PC-9 (cell line): ENCODE measurements at regions of chr17 and their contacts with region 1.

Region 1: DNA sequence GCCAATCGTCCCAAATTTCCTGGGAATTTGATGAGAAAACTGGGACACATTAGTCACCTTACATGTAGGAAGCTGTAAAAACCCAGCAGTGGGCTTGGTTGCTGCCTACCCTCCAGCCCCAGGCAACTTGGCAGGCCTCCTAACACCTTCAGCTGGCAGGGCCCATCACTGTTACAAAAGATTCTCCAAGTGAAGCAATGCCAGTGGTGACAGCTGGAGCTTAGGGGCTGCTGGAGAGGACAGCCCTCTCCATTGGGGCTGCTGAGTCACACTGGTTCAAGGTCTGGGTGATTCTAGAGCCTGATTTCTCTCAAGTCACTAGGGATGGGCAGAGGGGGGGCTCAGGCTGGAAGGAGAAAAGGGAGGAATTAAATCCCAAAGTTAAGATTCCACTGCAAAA is 180.6 kb downstream of the COPRS start:
- DNase-seq: peak; percentile 25 to 49
- H3K4me3 ChIP-seq: no peak overlapping the region
- H3K27ac ChIP-seq: no peak overlapping the region
- H3K4me1 ChIP-seq: peaks cover 27% of the 10 kb centered on the region
- H3K27me3 ChIP-seq: no peaks in the 10 kb centered on the region
- CTCF ChIP-seq: no peak

Region 2: DNA sequence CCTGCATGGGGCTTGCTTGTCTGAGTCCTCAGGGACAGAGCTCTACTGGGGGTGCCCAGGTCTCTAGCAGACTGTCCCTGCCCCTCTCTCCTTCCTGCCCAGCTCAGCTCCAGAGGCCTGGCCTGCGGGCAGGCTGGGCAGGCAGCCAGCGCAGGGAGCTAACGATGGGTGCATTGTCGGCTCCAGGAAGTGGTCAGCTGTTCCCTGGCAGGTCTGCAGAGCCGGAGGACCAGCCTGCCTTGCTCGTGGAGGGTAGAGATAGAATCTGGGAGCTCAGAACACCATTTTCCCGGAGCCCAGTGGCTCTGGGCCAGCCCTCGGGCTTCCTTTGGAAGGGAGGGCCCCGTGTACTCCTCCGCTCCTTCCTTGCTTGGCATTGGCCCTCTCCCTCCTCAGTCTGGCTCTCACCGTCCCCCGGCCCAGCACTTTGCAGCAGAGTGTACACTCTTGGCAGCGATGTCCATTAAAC is 97.4 kb before region 1 on chr17:
- CTCF ChIA-PET with region 1: no interaction called
- POLR2A ChIA-PET with region 1: interaction called, 11 read pairs
- intact Hi-C with region 1: no loop called
- DNase-seq: peak; percentile 90 to 95
- H3K4me3 ChIP-seq: no peak overlapping the region
- H3K27ac ChIP-seq: peak overlapping the region; percentile 71
- H3K4me1 ChIP-seq: peaks cover 63% of the 10 kb centered on the region
- H3K27me3 ChIP-seq: no peaks in the 10 kb centered on the region
- CTCF ChIP-seq: no peak

Region 3: GRCh38 chr17:31596382-31597323 is 81.8 kb before region 1 on chr17:
- CTCF ChIA-PET with region 1: interaction called, 3 read pairs
- POLR2A ChIA-PET with region 1: no interaction called
- intact Hi-C with region 1: loop called (anchors 1 kb)
- DNase-seq: peak; percentile 88 to 94
- H3K4me3 ChIP-seq: no peak overlapping the region
- H3K27ac ChIP-seq: peak overlapping the region; percentile 71
- H3K4me1 ChIP-seq: peaks cover 47% of the 10 kb centered on the region
- H3K27me3 ChIP-seq: no peaks in the 10 kb centered on the region
- CTCF ChIP-seq: no peak

Region 4: DNA sequence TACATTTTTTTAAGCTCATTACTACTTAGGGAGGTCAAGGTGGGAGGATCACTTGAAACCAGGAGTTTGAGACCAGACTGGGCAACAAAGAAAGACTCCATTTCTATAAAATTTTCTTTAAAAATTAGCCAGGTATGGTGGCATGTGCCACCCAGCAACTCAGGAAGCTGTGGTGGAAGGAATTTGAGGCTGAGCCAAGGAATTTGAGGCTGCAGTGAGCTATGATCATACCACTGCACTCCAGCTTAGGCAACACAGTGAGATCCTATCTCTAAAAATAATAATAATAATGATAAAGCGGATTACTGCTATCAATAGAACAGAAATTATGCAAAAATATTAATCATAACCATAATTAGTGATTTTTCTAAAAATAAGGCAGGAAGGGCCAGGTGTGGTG is 10.3 kb after region 1 on chr17:
- CTCF ChIA-PET with region 1: no interaction called
- POLR2A ChIA-PET with region 1: interaction called, 10 read pairs
- intact Hi-C with region 1: no loop called
- DNase-seq: peak; percentile 23 to 61
- H3K4me3 ChIP-seq: no peak overlapping the region
- H3K27ac ChIP-seq: no peak overlapping the region
- H3K4me1 ChIP-seq: peaks cover 17% of the 10 kb centered on the region
- H3K27me3 ChIP-seq: no peaks in the 10 kb centered on the region
- CTCF ChIP-seq: no peak

Region 5: DNA sequence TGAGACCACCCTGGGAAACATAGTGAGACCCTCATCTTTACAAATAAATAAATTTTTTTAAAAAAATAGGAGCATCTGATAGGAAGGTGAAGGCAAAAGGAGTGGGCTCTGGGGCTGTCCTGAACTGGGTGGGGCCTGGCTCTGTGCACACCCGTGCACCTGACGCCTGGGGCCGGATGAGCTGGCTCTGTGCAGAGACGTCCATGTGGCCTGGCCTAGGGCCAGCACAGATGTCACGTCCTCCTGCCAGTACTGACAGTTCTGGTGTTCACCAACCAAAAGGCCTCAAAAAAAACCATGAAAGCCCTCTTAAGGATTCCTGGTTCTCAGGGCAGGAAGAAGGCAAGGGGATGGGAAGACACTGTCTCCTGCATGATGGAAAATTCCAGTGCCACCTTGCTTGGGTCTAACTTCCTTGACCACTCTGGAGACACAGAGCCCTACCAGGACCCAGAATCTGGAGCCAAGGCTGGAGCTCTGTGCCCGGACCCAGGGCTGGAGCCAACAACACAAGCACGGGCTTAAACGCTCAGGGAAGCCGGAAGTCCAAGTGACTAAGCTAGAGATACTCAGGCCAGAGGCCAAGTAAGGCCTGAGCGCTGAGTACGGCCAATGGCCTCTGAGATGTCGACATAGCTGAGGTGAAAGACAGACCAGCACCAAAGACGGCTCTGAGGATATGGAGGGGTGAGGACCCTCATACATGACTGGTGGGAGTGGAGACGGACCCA is 147.7 kb after region 1 on chr17:
- CTCF ChIA-PET with region 1: no interaction called
- POLR2A ChIA-PET with region 1: no interaction called
- intact Hi-C with region 1: loop called (anchors 5 kb)
- DNase-seq: peak in 1 of 2 experiments; percentile 58
- H3K4me3 ChIP-seq: no peak overlapping the region
- H3K27ac ChIP-seq: no peak overlapping the region
- H3K4me1 ChIP-seq: no peaks in the 10 kb centered on the region
- H3K27me3 ChIP-seq: no peaks in the 10 kb centered on the region
- CTCF ChIP-seq: no peak